HCT116 (cell line): ENCODE measurements at regions of chr10 and their contacts with region 1.

Region 1: DNA sequence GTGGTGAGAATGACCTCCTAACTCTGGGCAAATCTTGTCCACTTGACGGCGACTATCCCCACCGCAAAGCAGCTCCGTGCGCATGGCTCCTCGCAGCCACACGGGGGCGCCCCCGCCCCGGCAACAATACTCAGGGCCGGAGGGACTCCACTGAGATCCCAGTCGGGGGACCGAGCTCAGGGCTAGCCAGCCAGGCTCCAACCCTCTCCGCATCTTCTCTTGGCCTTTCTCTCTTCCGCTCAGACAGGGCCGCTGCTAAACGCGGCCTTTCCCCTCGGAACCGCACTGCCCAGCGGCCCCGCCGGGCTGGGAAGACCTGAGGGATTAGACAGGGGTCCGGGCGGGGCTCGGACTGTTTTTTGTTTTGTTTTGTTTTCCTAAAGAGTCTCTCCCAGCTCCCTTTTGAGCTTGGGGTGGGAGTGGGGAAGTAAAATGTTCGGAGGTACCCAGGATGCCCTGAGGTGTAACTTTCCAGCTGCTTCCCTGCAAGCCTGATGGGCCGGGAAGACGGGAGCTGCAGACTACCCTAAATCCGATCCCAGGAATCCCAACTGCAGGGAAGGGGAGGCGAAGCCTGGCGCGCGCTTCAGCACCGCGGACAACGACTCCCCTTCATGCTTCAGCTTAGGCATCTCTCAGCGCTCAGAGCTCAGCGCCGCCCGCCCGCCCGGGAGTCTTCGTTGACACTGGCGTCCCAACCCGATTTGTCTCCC is 2.7 kb downstream of the KCNIP2 start:
- DNase-seq: peak; percentile 72
- ATAC-seq: peak; percentile 73
- H3K4me3 ChIP-seq: peak overlapping the region; percentile 48 to 60
- H3K27ac ChIP-seq: peak overlapping the region; percentile 4
- H3K4me1 ChIP-seq: peaks cover 14 to 32% of the 10 kb centered on the region in 2 experiments
- H3K27me3 ChIP-seq: no peaks in the 10 kb centered on the region
- CTCF ChIP-seq: peak in 2 of 3 experiments; percentile 100; a peak in 4 of 6 replicates
- POLR2A ChIP-seq: no peak
- RAD21 ChIP-seq: no peak

Region 2: DNA sequence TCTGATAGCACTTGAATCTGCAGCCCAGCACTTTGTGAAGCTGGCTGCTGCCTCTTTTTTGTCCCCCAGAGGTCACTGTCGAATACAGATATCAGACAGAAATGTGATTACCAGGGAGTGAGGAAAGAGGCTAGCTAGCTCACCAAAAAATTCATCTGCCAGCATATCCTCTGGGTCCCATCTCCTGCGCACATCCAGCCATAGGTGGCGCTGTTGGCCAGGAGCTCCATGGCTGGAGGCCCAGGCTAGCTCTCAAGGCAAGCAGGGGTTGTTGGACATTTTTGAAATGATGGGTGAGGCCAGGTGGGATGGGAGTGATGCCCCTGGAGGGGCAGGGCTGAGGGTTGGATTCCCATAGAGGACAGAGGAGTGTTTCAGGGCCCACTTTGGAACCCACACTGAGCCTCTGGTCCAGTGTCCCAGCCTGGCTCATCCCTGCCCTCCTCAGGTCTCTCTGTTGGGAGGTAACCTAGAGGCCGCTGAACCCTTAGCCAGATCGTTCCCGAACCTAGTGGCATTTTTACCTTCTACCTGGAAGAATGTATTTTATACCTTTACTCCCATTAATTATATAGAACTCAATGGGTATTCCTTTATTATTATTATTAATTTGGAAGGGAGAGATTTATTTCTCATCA is 238.0 kb before region 1 on chr10:
- CTCF ChIA-PET with region 1: interaction called, 29 read pairs
- POLR2A ChIA-PET with region 1: interaction called, 3 read pairs
- RAD21 ChIA-PET with region 1: interaction called in 1 of 2 experiments, 4 read pairs
- intact Hi-C with region 1: no loop called
- DNase-seq: peak; percentile 71
- ATAC-seq: peak; percentile 99
- H3K4me3 ChIP-seq: no peak overlapping the region
- H3K27ac ChIP-seq: no peak overlapping the region
- H3K4me1 ChIP-seq: no peaks in the 10 kb centered on the region
- H3K27me3 ChIP-seq: no peaks in the 10 kb centered on the region
- CTCF ChIP-seq: peak; percentile 97 to 99 (median 99)
- POLR2A ChIP-seq: no peak
- RAD21 ChIP-seq: peak; percentile 96

Region 3: DNA sequence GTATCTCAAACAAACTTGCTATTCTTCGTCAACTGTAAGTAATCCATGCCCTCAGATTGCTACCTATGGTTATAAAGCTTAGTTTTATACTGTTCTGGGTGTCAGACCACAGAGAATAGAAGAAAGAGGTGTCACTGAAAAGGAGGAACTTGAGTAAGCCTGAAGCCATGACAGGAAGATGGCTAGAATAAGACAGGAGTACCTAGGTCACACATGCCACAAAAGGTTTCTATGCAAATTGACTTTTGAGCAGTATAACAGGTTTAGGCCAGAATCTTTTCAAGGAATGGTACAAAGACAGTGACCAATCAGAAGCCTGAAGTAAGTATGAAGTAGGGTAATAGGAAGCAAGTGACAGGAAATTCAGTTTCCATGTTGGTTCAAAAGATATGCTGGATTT is 169.4 kb before region 1 on chr10:
- CTCF ChIA-PET with region 1: no interaction called
- POLR2A ChIA-PET with region 1: no interaction called
- RAD21 ChIA-PET with region 1: no interaction called
- intact Hi-C with region 1: no loop called
- DNase-seq: no peak
- ATAC-seq: no peak
- H3K4me3 ChIP-seq: no peak overlapping the region
- H3K27ac ChIP-seq: no peak overlapping the region
- H3K4me1 ChIP-seq: no peaks in the 10 kb centered on the region
- H3K27me3 ChIP-seq: no peaks in the 10 kb centered on the region
- CTCF ChIP-seq: no peak
- POLR2A ChIP-seq: no peak
- RAD21 ChIP-seq: no peak

Region 4: GRCh38 chr10:101710059-101710695 is 130.7 kb before region 1 on chr10:
- CTCF ChIA-PET with region 1: no interaction called
- POLR2A ChIA-PET with region 1: no interaction called
- RAD21 ChIA-PET with region 1: no interaction called
- intact Hi-C with region 1: no loop called
- DNase-seq: no peak
- ATAC-seq: no peak; the same call in 1 of the 2 replicates
- H3K4me3 ChIP-seq: no peak overlapping the region
- H3K27ac ChIP-seq: no peak overlapping the region
- H3K4me1 ChIP-seq: no peaks in the 10 kb centered on the region
- H3K27me3 ChIP-seq: peaks cover 11% of the 10 kb centered on the region
- CTCF ChIP-seq: 0 out of 6 replicates have a peak, but pooled peaks of 1 of the 3 experiments have one; percentile 3
- POLR2A ChIP-seq: no peak
- RAD21 ChIP-seq: no peak

Region 5: DNA sequence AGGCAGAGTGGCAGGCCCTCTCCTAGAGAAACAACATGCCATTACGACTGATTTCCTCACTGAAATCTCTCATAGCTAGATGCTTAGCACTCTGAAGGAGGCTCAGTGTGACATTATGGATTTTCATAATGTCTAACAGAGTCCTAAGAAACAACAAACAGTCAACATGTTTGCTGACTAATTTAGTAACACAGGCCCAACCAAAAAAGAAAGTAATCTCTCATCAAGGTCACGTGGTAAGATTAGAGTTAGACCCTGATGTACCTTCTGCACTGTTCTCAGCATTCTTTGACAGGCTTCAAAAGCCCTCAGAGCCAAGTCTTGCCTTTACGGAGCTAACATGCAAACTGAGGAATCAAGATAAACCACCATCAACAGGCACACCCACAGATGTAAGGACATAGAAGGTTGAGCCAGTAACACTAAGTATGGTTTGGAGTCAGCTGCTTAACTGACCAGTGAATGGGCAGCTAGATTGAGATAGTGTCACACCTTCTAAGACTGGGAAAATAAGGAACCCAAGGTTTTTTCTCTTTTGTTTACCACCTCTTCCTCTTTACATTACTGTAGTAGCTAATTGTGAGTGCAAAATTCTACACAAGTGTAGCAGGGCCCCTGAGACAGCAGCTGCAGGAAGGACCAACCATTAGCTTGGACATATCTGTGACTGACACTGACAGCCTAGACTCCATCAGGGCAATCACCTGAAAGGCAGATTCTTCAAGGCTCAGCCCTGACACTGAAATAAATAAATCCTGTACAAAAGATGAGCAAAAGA is 18.0 kb after region 1 on chr10:
- CTCF ChIA-PET with region 1: interaction called, 41 read pairs
- POLR2A ChIA-PET with region 1: no interaction called
- RAD21 ChIA-PET with region 1: no interaction called
- intact Hi-C with region 1: no loop called
- DNase-seq: no peak
- ATAC-seq: no peak
- H3K4me3 ChIP-seq: no peak overlapping the region
- H3K27ac ChIP-seq: no peak overlapping the region
- H3K4me1 ChIP-seq: peaks cover 0 to 6% of the 10 kb centered on the region in 2 experiments; a peak in 1 of 4 replicates
- H3K27me3 ChIP-seq: no peaks in the 10 kb centered on the region
- CTCF ChIP-seq: no peak
- POLR2A ChIP-seq: no peak
- RAD21 ChIP-seq: no peak

Region 6: DNA sequence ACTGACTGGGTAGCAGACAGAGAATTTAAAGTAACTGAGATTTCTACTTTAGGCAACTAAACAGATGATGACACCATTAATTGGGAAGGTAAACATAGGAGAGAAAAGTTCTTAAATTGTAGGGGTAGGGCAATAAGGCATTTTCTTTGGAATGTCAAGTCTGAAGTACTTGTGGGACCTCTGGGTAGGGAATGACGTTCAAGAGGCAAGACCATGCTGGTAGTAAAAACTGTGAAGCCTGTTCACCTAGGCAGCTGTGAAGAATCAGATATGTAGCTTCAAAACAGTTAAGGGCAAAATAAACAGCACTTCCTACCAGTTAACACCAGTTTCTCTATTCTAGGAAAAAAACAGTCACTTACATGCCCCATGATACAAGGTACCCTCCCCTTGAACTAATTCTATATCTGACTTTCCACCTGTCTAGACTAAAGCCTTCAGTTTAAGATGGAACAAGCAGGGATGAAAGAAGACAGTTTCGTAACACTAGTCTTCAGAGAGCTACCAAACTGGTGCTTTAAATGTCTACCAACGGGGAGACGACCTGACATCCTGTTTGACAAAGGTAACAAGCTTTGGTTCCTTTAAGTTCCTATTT is 65.8 kb after region 1 on chr10:
- CTCF ChIA-PET with region 1: interaction called, 16 read pairs
- POLR2A ChIA-PET with region 1: no interaction called
- RAD21 ChIA-PET with region 1: no interaction called
- intact Hi-C with region 1: no loop called
- DNase-seq: no peak
- ATAC-seq: no peak
- H3K4me3 ChIP-seq: no peak overlapping the region
- H3K27ac ChIP-seq: no peak overlapping the region
- H3K4me1 ChIP-seq: no peaks in the 10 kb centered on the region
- H3K27me3 ChIP-seq: no peaks in the 10 kb centered on the region
- CTCF ChIP-seq: no peak
- POLR2A ChIP-seq: no peak
- RAD21 ChIP-seq: no peak

Region 7: DNA sequence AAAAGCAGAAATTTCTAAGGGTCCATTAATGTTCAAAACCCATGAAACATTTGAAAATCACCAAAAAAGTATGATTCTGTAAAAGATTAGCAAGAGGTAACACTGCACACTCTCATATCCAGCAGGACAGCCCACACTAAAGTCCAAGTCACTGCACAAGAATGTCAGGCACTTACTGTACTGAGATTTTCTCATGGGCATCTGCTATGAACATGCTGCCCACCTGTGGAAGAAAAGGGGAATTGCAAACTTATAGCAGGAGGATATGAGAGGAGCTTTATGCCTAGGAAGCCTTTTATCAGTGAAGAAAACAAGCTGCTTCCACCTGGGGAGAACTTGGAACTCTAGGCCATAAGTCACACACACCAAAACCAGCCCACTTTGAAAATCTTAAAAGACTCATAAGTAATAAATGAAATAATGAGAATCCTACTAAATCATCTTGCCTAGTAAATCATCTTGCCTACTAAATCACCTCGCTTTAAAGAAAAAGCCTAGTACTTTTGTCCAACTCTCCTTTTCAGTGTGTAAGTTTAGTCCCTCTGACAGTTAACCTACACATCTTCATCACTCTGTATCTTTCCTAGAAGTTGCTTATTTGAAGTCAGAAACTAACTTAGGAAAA is 169.0 kb after region 1 on chr10:
- CTCF ChIA-PET with region 1: interaction called, 267 read pairs
- POLR2A ChIA-PET with region 1: interaction called, 21 read pairs
- RAD21 ChIA-PET with region 1: interaction called, 37 to 50 read pairs
- intact Hi-C with region 1: loop called (anchors 1 kb)
- DNase-seq: peak; percentile 88
- ATAC-seq: peak; percentile 97
- H3K4me3 ChIP-seq: no peak overlapping the region
- H3K27ac ChIP-seq: no peak overlapping the region
- H3K4me1 ChIP-seq: peaks cover 5 to 7% of the 10 kb centered on the region in 2 experiments
- H3K27me3 ChIP-seq: no peaks in the 10 kb centered on the region
- CTCF ChIP-seq: peak; percentile 98 to 100 (median 99)
- POLR2A ChIP-seq: no peak
- RAD21 ChIP-seq: peak; percentile 100

Region 8: GRCh38 chr10:102064868-102065560 is 224.1 kb after region 1 on chr10 and contains the start of gene HPS6:
- CTCF ChIA-PET with region 1: interaction called, 14 read pairs
- POLR2A ChIA-PET with region 1: interaction called, 3 read pairs
- RAD21 ChIA-PET with region 1: interaction called in 1 of 2 experiments, 3 read pairs
- intact Hi-C with region 1: no loop called
- DNase-seq: peak; percentile 77
- ATAC-seq: peak; percentile 97
- H3K4me3 ChIP-seq: peak within 1 kb of the TSS; percentile 77 to 89
- H3K27ac ChIP-seq: peak within 1 kb of the TSS; percentile 94
- H3K4me1 ChIP-seq: peaks cover 12 to 22% of the 10 kb centered on the region in 2 experiments
- H3K27me3 ChIP-seq: no peaks in the 10 kb centered on the region
- CTCF ChIP-seq: peak in 2 of 3 experiments; percentile 25 to 28; a peak in 2 of 6 replicates
- POLR2A ChIP-seq: peak; percentile 88
- RAD21 ChIP-seq: no peak
- total RNA-seq, gene HPS6: 31.7 TPM